ENCODE measurements at regions of chr7 and their contacts with region 1.

Region 1: DNA sequence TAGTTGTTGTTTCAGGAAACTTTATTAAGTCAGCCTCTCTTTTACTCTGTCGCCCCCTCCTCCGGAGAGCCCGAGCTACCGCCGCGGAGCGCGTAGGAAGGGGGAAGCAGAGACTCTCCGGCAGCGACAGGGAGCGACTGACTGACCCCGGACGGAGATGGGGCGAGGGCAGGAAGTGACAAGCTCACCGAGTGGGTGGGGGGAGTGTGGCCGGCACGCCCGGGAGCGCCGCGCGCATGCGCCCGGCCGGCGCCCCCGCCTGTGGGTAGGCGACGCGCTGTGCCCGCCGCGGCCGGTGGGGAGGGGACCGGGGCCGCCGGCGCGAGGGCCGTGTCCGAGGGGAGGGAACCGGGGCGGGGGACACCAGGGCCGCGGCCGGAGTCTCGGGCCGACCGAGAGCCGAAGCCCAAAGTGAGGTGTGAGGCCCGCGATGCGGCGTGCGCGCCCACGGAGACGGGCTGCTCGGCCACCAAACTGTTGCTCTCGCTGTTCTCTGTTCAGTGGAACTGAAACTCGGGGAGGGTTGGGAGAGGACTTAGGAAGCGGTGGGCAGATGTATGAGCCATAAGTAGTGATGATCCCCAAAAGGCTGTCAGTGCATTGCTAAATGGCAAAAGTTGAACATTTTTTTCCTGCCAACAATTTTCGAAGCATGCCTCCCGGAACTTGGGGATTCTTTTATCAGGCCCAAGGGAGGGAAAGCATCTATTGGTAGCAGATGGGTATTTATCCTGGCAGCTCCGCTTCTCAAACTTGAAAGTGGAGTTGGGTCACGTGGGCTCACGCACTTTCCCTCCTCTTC is at the start of gene ZNF800:
- DNase-seq: peak; percentile 92
- ATAC-seq: peak; percentile 87
- H3K4me3 Mint-ChIP-seq: peak within 1 kb of the TSS; percentile 87
- H3K27ac Mint-ChIP-seq: peak within 1 kb of the TSS; percentile 98
- H3K4me1 Mint-ChIP-seq: peaks cover 54% of the 10 kb centered on the region
- H3K27me3 Mint-ChIP-seq: no peaks in the 10 kb centered on the region
- total RNA-seq, gene ZNF800: 39.7 to 40.6 TPM

Region 2: DNA sequence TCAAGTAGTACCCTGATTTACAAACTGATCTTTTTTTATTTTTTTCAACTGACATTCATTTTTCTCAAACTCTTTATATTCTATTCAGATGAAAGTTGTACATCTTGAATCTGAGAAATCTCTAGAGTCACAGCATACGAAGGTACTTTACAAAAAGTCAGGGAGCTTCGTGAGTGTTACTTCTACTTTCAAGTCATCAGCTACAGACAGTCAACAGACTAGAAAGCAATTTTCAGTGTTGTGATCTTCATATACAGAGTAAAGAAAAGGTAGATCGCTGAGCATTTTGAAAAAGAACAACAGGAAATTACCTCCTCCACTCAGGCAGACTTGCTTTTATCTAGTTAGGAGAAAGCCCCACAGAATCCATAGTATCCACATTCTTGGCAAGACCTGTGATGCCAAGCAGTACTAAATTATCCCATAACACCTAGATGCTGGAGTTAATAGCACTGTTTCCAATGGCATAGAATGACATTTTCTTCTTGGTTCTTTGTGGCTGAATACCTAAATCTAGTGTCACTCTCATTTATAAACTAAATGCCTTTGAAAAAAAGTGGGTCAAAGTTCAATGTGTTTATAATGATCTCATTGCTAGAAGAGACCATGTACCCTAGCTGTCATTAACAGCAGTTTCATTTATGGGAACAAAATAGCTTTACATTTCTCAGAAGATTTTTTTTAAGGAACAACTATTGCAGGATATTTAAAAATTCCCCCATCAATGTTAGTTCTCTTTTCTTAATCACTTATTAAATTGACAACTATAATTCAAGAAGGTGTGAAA is 11.7 kb after region 1 on chr7:
- CTCF ChIA-PET with region 1: interaction called, 10 read pairs
- DNase-seq: no peak
- ATAC-seq: no peak
- H3K4me3 Mint-ChIP-seq: no peak overlapping the region
- H3K27ac Mint-ChIP-seq: peak overlapping the region; percentile 22
- H3K4me1 Mint-ChIP-seq: peaks cover 6% of the 10 kb centered on the region
- H3K27me3 Mint-ChIP-seq: peaks cover 15% of the 10 kb centered on the region

Region 3: GRCh38 chr7:127447326-127447945 is 54.7 kb after region 1 on chr7:
- CTCF ChIA-PET with region 1: interaction called, 32 read pairs
- DNase-seq: peak; percentile 75
- ATAC-seq: peak; percentile 100
- H3K4me3 Mint-ChIP-seq: no peak overlapping the region
- H3K27ac Mint-ChIP-seq: no peak overlapping the region
- H3K4me1 Mint-ChIP-seq: peaks cover 8% of the 10 kb centered on the region
- H3K27me3 Mint-ChIP-seq: peaks cover 45% of the 10 kb centered on the region

Measured in activated CD8-positive, alpha-beta memory T cell treated with anti-CD3 and anti-CD28 coated beads, Interleukin-2, amount 10 ng/mL, durations not matched to agents 7 days and 5 days (primary cell).